HepG2 (cell line): ENCODE measurements at regions of chr14 and their contacts with region 1.

Region 1: GRCh38 chr14:85471727-85472126 is 58.2 kb upstream of the FLRT2 start:
- DNase-seq: peak; percentile 77
- ATAC-seq: peak; percentile 95
- H3K4me3 ChIP-seq: no peak overlapping the region
- H3K27ac ChIP-seq: no peak overlapping the region
- H3K4me1 ChIP-seq: peaks cover 10% of the 10 kb centered on the region; the same call in 1 of the 2 replicates
- H3K27me3 ChIP-seq: no peaks in the 10 kb centered on the region; a peak in 1 of 5 replicates
- CTCF ChIP-seq: no peak
- EP300 ChIP-seq: 0 out of 4 replicates have a peak, but pooled peaks of 1 of the 2 experiments have one; percentile 9
- POLR2A ChIP-seq: no peak
- RAD21 ChIP-seq: no peak

Region 2: DNA sequence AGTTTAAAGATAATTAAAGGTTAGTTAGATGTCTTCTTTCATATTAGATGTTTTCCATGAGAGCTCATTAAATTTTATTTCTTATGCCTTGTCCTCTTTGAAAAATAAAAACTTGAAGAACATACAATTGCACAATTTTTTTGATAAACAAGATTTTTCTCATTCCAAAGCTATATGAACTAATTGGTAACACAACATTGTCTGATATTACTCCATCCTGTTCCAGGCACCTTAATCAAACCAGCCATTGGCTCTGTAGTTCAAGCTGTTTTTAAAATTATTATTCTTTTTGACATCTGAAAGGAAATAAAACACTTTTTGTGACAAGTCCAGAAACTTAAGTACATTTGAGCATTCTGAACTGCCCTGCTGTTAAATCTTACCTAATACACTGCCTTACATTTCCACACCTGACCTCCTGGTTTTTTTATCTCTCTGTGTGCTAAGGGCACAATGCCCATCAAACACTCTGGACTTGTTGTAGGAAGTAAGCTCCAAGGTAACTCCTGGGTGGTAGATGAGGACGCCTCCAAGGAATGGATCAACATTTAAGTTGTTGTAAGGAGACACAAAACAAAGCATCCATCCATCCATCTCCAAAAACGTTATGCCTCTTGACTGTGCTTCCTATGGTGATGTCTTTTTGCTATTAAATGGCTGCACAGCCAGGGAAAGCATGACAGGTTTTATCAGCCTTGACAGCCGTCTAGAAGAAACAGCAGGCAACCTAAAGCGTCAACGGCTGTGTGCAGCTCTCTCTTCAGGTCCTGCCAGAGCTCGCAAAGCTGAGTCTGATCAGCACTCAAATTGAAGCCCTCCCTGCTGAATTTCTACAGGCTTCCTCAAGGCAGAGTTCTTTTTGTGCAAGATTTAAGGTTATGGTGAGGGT is 391.6 kb before region 1 on chr14:
- CTCF ChIA-PET with region 1: no interaction called
- POLR2A ChIA-PET with region 1: no interaction called
- in situ Hi-C with region 1: no loop called
- intact Hi-C with region 1: no loop called
- DNase-seq: no peak
- ATAC-seq: no peak
- H3K4me3 ChIP-seq: no peak overlapping the region
- H3K27ac ChIP-seq: no peak overlapping the region
- H3K4me1 ChIP-seq: no peaks in the 10 kb centered on the region
- H3K27me3 ChIP-seq: no peaks in the 10 kb centered on the region
- CTCF ChIP-seq: no peak
- EP300 ChIP-seq: no peak
- POLR2A ChIP-seq: no peak
- RAD21 ChIP-seq: no peak

Region 3: DNA sequence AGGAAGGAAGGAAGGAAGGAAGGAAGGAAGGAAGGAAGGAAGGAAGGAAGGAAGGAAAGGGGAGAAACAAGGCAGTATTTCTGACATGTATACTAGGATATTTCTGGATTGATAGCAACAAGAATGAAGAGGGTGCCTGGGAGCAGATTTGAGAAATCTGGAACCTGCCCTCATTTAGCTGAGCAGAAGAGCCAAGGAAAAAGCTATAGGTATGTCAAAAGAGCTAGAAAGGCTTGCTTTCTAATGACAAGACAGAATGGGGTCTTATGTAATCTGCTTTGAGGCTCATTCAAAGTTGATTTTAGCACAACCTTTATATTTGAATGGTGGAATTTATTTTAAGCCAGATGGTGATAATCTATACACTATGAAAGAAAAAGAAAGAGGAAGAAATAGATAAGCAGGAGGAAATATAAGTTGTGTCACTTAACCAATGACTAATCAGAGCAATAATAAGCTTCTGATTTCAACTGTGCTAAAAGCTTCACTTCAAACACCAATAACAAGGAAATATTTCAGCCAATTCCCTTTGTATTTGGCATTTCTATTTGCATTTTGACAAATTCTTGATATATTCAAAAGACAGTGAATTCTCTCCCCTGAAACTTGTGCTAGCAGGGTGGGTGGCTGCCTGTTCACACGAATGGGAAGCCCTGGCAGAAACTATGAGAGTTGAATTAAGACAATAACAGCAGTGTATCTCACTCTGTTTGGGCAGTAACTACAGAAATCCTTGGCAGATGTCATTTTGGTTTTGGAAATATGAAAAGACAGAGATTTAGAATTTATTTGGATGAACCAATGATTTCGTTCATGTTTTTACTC is 18.1 kb before region 1 on chr14:
- CTCF ChIA-PET with region 1: no interaction called
- POLR2A ChIA-PET with region 1: no interaction called
- in situ Hi-C with region 1: no loop called
- intact Hi-C with region 1: loop called (anchors 2 kb)
- DNase-seq: no peak
- ATAC-seq: no peak
- H3K4me3 ChIP-seq: no peak overlapping the region
- H3K27ac ChIP-seq: no peak overlapping the region
- H3K4me1 ChIP-seq: peaks cover 7% of the 10 kb centered on the region; the same call in 1 of the 2 replicates
- H3K27me3 ChIP-seq: no peaks in the 10 kb centered on the region
- CTCF ChIP-seq: no peak
- EP300 ChIP-seq: no peak
- POLR2A ChIP-seq: no peak
- RAD21 ChIP-seq: no peak